ENCODE measurements at regions of chr1 and their contacts with region 1.

Region 1: DNA sequence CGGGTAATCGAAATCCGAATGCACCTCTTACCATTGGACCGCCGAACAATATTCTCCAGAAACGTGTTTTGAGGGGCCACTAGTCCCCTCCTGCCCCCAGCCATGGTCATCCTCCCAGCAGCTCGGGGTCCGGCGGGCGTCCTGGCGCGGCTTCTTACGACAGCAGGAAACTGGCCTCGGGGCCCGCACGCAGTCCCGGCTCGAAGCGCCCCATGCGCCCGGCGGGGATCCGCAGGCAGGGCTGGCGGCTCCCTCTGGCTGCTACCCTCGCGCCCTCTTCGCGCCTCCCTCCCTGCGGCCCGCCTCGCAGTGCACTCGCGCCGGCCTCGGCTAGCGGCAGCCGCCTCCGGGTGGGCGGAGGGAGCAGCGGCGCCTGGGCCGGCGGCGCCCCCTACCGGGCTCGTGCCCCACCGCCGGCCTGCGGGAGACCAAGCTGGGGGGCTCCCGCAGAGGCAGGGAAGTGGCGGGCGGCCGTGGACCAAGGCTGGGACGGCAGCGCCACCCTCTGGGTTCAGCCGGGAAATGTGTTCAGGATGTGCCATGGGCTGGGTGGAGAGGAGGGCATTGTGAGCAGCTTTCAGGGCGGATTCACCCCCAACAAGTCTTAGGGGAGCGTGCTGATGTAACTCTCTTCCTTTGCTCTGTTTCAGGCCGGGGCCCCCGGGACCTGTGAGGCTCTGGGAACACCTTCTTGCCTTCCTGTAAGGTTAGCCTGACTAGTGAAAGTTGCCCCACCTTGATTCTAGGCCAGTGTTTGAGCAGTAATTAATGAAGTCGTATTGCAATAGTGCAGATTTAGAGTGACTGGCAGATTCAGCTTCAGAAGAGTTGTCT is at the start of gene KCNH1:
- DNase-seq: peak; percentile 91 to 95 (median 94)
- ATAC-seq: peak; percentile 100
- H3K4me3 ChIP-seq: 0 out of 2 replicates have a peak within 1 kb of the TSS, but pooled peaks have one; percentile 17
- H3K27ac ChIP-seq: no peak within 1 kb of the TSS
- H3K4me1 ChIP-seq: peaks cover 0 to 12% of the 10 kb centered on the region in 2 experiments; a peak in 2 of 5 replicates
- H3K27me3 ChIP-seq: peaks cover 8 to 12% of the 10 kb centered on the region in 2 experiments
- CTCF ChIP-seq: peak; percentile 96 to 98 (median 97)
- EP300 ChIP-seq: no peak
- POLR2A ChIP-seq: no peak
- RAD21 ChIP-seq: peak; percentile 98 to 99
- polyA plus RNA-seq, gene KCNH1: not detected

Region 2: DNA sequence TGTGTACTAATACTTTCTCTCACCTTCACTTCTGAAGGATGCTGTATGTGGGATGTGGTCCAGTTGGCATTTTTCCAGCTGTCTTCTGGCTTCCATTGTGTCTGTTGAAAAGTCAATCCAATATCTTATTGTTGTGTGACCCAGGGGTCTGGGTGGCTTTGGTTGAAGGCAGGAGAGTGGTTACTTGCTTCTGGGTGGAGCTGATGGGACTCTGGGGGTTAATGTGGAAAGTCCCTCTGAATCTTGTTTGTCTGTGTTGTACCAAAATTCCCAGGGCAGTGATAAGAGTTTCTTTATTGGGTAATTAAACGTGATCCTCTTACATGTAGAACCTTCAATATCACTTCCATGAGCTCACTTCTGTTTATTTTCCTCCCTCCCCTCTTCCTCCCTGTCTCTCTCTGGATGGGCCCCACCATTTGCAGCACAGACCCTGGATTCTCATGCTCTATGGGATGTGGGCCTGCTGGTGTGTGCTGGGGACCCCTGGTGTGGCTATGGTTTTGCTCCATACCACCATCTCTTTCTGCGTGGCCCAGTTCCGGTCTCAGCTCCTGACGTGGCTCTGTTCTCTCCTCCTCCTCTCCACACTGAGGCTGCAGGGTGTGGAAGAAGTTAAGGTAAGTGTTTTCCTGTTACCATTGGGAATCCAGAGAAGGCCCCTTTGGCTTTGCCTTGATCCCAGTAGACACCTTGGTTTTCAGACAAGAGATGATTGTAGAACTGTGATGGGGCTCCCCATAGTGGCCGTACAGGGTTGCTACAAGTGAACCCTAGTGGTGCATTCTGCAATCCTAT is 733.8 kb before region 1 on chr1:
- CTCF ChIA-PET with region 1: no interaction called
- POLR2A ChIA-PET with region 1: no interaction called
- in situ Hi-C with region 1: loop called (anchors 10 kb)
- intact Hi-C with region 1: no loop called
- DNase-seq: peak; percentile 45 to 66 (median 57)
- ATAC-seq: peak; percentile 98
- H3K4me3 ChIP-seq: no peak overlapping the region
- H3K27ac ChIP-seq: no peak overlapping the region
- H3K4me1 ChIP-seq: no peaks in the 10 kb centered on the region
- H3K27me3 ChIP-seq: no peaks in the 10 kb centered on the region; a peak in 1 of 5 replicates
- CTCF ChIP-seq: peak; percentile 75 to 93 (median 84)
- EP300 ChIP-seq: no peak
- POLR2A ChIP-seq: no peak
- RAD21 ChIP-seq: peak; percentile 38 to 71; a peak in 3 of 4 replicates

Region 3: GRCh38 chr1:210455840-210456603 is 678.0 kb before region 1 on chr1:
- CTCF ChIA-PET with region 1: interaction called, 5 read pairs
- POLR2A ChIA-PET with region 1: no interaction called
- in situ Hi-C with region 1: loop called (anchors 10 kb)
- intact Hi-C with region 1: no loop called
- DNase-seq: no peak
- ATAC-seq: no peak
- H3K4me3 ChIP-seq: no peak overlapping the region
- H3K27ac ChIP-seq: no peak overlapping the region
- H3K4me1 ChIP-seq: no peaks in the 10 kb centered on the region
- H3K27me3 ChIP-seq: peaks cover 0 to 7% of the 10 kb centered on the region in 2 experiments; a peak in 1 of 5 replicates
- CTCF ChIP-seq: no peak
- EP300 ChIP-seq: no peak
- POLR2A ChIP-seq: no peak
- RAD21 ChIP-seq: no peak

Region 4: DNA sequence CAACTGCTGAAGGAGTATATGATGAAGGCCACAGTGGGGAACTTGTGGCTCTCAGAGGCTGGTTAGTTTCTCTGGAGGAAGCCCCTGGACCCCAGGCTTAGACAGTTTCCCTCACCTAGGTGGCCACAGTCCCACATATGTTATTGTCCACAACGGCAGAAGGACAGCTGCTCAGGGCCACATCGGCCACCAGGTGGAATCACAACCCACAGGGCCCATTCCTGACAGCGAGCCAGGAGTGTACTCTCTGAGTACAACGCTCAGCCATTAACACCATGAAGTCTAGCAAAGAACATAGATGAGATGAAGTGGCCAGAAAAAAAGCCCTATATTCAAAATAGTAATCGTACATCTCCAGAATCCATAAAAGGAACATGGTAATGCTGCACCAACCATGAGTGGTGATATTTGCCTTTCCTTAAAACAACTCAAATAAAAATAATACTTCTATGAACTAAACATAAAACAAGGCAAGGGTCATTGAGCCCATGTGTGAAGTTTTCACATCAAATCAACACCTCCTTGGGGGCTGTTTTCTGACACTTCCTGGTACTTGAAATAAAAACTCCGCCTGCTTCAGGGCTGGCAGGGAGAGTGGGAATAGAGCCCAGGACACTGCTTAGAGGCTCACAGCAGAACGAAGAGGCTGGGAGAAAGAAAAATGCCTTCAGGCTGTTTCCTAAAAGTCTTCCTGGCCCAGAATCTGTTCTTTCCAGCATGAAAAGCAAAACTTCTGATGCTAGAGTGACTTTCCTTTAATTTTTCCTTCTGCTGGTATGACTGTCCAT is 422.0 kb before region 1 on chr1:
- CTCF ChIA-PET with region 1: no interaction called
- POLR2A ChIA-PET with region 1: no interaction called
- in situ Hi-C with region 1: no loop called
- intact Hi-C with region 1: loop called (anchors 10 kb)
- DNase-seq: peak in 1 of 4 experiments; percentile 8
- ATAC-seq: peak; percentile 75
- H3K4me3 ChIP-seq: no peak overlapping the region
- H3K27ac ChIP-seq: no peak overlapping the region
- H3K4me1 ChIP-seq: no peaks in the 10 kb centered on the region
- H3K27me3 ChIP-seq: peaks cover 0 to 6% of the 10 kb centered on the region in 2 experiments; a peak in 3 of 5 replicates
- CTCF ChIP-seq: peak in 2 of 3 experiments; percentile 27 to 29; a peak in 3 of 6 replicates
- EP300 ChIP-seq: no peak
- POLR2A ChIP-seq: no peak
- RAD21 ChIP-seq: peak in 1 of 2 experiments; percentile 24; a peak in 2 of 4 replicates

Region 5: DNA sequence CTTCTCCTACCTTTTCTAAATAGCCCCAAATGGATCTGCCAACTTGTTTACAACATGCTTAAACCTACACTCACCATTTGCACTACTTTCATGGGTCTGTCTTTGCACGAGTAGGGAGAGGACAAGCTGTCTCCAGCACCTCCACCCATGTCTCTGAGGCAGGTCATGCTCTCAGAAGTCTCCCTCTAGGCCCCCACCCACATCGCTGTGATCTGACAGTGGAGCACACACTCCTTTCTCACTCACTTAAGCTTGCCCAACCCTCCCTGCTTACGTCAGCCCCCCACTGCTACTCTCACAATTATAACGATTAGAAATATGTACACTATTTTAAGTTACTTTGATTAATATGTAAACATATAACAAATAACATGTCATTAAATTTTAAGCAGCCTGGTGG is 141.2 kb before region 1 on chr1:
- CTCF ChIA-PET with region 1: no interaction called
- POLR2A ChIA-PET with region 1: no interaction called
- in situ Hi-C with region 1: no loop called
- intact Hi-C with region 1: no loop called
- DNase-seq: no peak
- ATAC-seq: no peak
- H3K4me3 ChIP-seq: no peak overlapping the region
- H3K27ac ChIP-seq: no peak overlapping the region
- H3K4me1 ChIP-seq: no peaks in the 10 kb centered on the region; a peak in 1 of 5 replicates
- H3K27me3 ChIP-seq: no peaks in the 10 kb centered on the region
- CTCF ChIP-seq: no peak
- EP300 ChIP-seq: no peak
- POLR2A ChIP-seq: no peak
- RAD21 ChIP-seq: no peak

Region 6: GRCh38 chr1:211198880-211199279 is 64.8 kb after region 1 on chr1:
- CTCF ChIA-PET with region 1: no interaction called
- POLR2A ChIA-PET with region 1: no interaction called
- in situ Hi-C with region 1: no loop called
- intact Hi-C with region 1: no loop called
- DNase-seq: no peak
- ATAC-seq: no peak
- H3K4me3 ChIP-seq: no peak overlapping the region
- H3K27ac ChIP-seq: no peak overlapping the region
- H3K4me1 ChIP-seq: 0 out of 5 replicates have a peak, but pooled peaks cover 0 to 3% of the 10 kb centered on the region in 2 experiments
- H3K27me3 ChIP-seq: no peaks in the 10 kb centered on the region
- CTCF ChIP-seq: no peak
- EP300 ChIP-seq: no peak
- POLR2A ChIP-seq: no peak
- RAD21 ChIP-seq: no peak

Region 7: GRCh38 chr1:211258756-211259637 is 124.9 kb after region 1 on chr1 and contains the start of gene RCOR3:
- CTCF ChIA-PET with region 1: no interaction called
- POLR2A ChIA-PET with region 1: no interaction called
- in situ Hi-C with region 1: no loop called
- intact Hi-C with region 1: loop called (anchors 2 kb)
- DNase-seq: peak; percentile 93 to 98 (median 94)
- ATAC-seq: peak; percentile 83
- H3K4me3 ChIP-seq: peak within 1 kb of the TSS; percentile 93
- H3K27ac ChIP-seq: peak within 1 kb of the TSS; percentile 97
- H3K4me1 ChIP-seq: peaks cover 7 to 19% of the 10 kb centered on the region in 2 experiments; a peak in 3 of 5 replicates
- H3K27me3 ChIP-seq: no peaks in the 10 kb centered on the region
- CTCF ChIP-seq: peak; percentile 70 to 84 (median 84)
- EP300 ChIP-seq: peak; percentile 53
- POLR2A ChIP-seq: peak; percentile 88
- RAD21 ChIP-seq: peak; percentile 42 to 54; a peak in 3 of 4 replicates
- polyA plus RNA-seq, gene RCOR3: 9.7 to 10.5 TPM

Region 8: GRCh38 chr1:211654838-211655787 is 521.1 kb after region 1 on chr1:
- CTCF ChIA-PET with region 1: interaction called, 4 read pairs
- POLR2A ChIA-PET with region 1: no interaction called
- in situ Hi-C with region 1: no loop called
- intact Hi-C with region 1: loop called (anchors 1 kb)
- DNase-seq: peak; percentile 86 to 94 (median 88)
- ATAC-seq: peak; percentile 98
- H3K4me3 ChIP-seq: no peak overlapping the region
- H3K27ac ChIP-seq: no peak overlapping the region
- H3K4me1 ChIP-seq: peaks cover 0 to 9% of the 10 kb centered on the region in 2 experiments; a peak in 3 of 5 replicates
- H3K27me3 ChIP-seq: no peaks in the 10 kb centered on the region
- CTCF ChIP-seq: peak; percentile 97 to 99 (median 99)
- EP300 ChIP-seq: peak; percentile 29; the same call in 1 of the 2 replicates
- POLR2A ChIP-seq: no peak
- RAD21 ChIP-seq: peak; percentile 100